Activated B cell treated with CpG ODN at 0.5 μM for 24 hours (primary cell): ENCODE measurements at regions of chr5 and their contacts with region 1.

Region 1: DNA sequence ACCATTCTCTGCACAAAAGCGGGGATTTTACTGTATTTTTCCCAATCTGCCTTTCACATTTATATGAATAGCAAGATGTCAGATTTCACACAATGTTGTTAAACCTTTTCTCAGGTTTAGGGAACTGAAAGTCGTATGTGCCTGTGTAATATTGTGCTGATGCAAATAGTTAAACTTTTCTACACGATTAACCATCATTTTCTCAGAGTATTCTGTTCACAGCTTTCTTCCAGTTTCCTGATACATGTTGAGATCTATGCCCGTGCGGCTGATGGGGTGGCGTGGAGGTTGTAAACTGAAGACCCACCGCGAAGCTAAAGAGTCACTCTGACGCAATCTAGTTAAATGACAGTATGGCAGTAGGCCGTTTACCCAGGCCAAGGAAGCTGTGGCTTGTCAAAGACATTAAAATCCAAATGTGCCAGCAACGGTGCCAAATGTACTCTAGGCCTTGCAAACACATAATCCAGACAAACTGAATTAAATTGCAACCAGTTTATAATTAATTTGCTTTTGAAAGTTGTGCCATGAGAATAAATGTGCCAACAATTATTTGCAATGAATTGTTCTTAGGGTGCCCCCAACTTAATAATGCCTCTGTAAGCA is 145.7 kb downstream of the EBF1 start:
- DNase-seq: peak; percentile 51
- ATAC-seq: peak; percentile 73
- H3K4me3 Mint-ChIP-seq: peak overlapping the region; percentile 62
- H3K27ac Mint-ChIP-seq: peak overlapping the region; percentile 96
- H3K4me1 Mint-ChIP-seq: peaks cover 97% of the 10 kb centered on the region
- H3K27me3 Mint-ChIP-seq: no peaks in the 10 kb centered on the region
- CTCF ChIP-seq: no peak

Region 2: DNA sequence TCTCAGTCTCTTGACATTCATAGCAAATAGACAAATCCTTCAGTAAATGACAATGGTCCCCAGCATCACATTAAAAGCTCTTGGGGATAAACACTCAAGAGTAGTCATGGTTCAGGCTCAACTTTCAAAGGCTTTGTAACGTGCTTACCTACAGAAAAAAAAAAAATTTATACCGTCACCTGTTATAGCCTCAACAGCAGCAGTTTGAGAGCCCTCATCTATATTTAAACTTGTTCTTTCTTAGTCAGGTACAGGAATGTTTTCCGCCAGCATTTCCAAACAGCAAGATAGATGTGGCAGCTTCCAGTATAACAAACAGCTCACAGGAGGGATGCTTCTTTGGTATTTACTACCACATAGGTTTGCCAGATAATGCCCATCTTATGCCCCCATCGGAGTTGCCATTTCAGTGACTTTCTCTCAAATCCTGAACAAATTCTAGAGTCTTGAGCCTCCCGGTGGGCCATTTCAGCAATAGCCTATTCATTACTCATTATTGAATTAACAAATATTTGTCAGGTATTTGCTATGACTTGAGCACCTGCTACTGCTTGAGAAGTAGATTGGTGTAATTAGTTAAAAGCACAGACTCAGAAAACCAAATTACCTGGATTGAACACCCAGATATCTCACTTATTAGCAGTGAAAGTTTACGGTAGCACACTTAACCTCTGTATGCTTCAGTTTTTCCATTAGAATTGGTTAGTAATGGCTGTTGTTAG is 324.3 kb before region 1 on chr5:
- CTCF ChIA-PET with region 1: no interaction called
- POLR2A ChIA-PET with region 1: no interaction called
- intact Hi-C with region 1: no loop called
- DNase-seq: no peak
- ATAC-seq: no peak
- H3K4me3 Mint-ChIP-seq: no peak overlapping the region
- H3K27ac Mint-ChIP-seq: no peak overlapping the region
- H3K4me1 Mint-ChIP-seq: no peaks in the 10 kb centered on the region
- H3K27me3 Mint-ChIP-seq: no peaks in the 10 kb centered on the region
- CTCF ChIP-seq: no peak

Region 3: DNA sequence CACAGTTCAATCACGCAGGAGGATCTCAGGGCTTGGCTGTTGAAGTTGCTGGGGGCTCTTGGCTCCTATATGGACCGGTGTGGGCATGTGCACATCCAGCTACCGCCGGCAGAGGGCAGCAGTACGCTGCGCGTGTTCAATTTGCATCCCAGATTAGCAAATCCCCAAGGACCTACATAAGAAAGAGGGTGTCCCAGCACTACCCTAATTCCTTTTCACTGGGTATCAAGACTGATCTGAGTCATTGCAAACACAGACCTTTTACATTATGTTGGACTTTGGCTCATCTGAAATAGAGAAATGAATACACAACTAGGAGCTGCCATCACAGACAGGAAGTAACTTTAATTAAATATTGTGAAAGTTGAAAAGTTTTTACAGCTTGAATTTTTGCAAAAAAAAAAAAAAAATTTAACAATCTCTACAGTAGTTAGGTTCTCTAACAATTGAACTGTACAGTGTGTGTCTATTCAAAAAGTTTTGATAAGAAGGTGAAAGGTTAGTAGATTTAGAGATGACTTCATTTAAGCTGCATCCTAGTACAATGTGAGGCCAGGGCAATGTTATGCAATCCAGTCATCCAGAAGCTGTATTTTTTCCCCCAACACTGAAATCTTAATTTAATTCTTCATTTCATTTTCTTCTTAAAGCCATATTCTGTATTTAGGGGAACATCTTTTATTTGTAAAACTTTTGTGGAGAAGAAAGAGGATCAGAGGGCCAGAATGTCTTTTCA is 258.3 kb before region 1 on chr5:
- CTCF ChIA-PET with region 1: interaction called, 6 read pairs
- POLR2A ChIA-PET with region 1: interaction called, 13 read pairs
- intact Hi-C with region 1: loop called (anchors 5 kb)
- DNase-seq: peak; percentile 76
- ATAC-seq: peak; percentile 96
- H3K4me3 Mint-ChIP-seq: no peak overlapping the region
- H3K27ac Mint-ChIP-seq: peak overlapping the region; percentile 73
- H3K4me1 Mint-ChIP-seq: peaks cover 26% of the 10 kb centered on the region
- H3K27me3 Mint-ChIP-seq: no peaks in the 10 kb centered on the region
- CTCF ChIP-seq: peak; percentile 92

Region 4: DNA sequence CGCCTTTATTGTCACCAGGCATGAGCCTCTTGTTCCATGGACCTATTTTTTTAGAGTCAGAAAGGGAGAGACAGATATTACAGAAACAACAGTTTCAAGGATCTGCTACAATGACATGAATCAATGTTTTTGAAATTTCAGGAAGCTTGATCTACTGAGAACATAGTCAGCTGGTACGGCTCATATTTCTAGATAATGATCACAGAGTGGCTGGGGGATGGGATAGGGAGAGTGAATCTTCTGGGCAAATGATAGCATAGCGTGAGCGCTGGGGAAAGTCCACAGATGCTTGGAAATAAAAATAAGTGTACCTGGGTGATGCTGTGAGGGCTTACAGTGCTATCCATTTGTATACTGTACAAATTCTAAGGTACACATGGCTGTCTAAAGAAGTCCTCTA is 194.7 kb before region 1 on chr5:
- CTCF ChIA-PET with region 1: no interaction called
- POLR2A ChIA-PET with region 1: no interaction called
- intact Hi-C with region 1: no loop called
- DNase-seq: no peak
- ATAC-seq: no peak
- H3K4me3 Mint-ChIP-seq: no peak overlapping the region
- H3K27ac Mint-ChIP-seq: peak overlapping the region; percentile 15
- H3K4me1 Mint-ChIP-seq: peaks cover 60% of the 10 kb centered on the region
- H3K27me3 Mint-ChIP-seq: no peaks in the 10 kb centered on the region
- CTCF ChIP-seq: no peak

Region 5: GRCh38 chr5:158819840-158820620 is 134.0 kb before region 1 on chr5:
- CTCF ChIA-PET with region 1: interaction called, 3 read pairs
- POLR2A ChIA-PET with region 1: interaction called, 9 read pairs
- intact Hi-C with region 1: loop called (anchors 1 kb)
- DNase-seq: no peak
- ATAC-seq: peak; percentile 76
- H3K4me3 Mint-ChIP-seq: peak overlapping the region; percentile 75
- H3K27ac Mint-ChIP-seq: peak overlapping the region; percentile 95
- H3K4me1 Mint-ChIP-seq: peaks cover 99% of the 10 kb centered on the region
- H3K27me3 Mint-ChIP-seq: no peaks in the 10 kb centered on the region
- CTCF ChIP-seq: no peak

Region 6: DNA sequence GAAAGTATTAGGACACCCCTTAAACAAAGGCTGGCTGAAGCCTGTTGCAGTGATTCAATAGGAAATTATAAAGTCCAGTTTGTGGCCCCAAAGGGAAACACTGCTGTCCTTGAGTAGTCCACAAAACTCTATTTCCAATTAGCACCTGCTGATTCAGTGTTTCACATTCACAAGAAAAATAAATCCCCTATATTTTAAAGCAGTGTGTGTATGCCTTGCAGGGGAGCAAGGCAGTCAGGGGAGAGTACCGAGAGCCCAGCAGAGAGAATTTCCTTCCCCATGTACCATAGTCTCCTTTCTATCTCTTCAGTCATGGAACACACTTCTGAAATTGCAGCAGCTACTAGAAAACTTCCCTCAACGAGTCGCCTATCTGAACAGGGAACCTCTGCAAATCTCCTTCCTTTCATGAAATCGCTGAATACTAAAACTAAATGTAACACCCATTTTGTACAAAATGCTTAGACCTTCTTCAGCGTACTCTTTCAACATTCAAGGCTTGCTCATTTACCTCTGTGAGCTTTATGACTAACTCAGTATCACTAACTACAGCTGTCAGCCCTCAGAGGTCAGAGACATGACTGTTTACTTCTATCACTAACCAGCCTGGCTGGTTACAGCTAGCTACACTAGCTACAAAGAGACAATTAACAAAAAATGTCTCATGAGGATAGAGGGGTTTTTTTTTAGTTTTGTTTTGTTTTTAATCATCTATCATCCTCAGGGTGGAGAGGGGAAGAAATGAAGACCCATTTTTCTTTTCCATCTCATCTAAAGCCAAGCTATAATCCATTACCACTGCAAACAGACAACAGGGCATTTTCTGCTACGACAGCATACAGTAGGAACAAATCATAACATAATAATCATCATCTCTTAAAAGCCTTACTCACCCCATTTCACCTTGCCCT is 43.0 kb before region 1 on chr5:
- CTCF ChIA-PET with region 1: interaction called, 3 read pairs
- POLR2A ChIA-PET with region 1: interaction called, 12 read pairs
- intact Hi-C with region 1: loop called (anchors 5 kb)
- DNase-seq: no peak
- ATAC-seq: peak; percentile 72
- H3K4me3 Mint-ChIP-seq: peak overlapping the region; percentile 61
- H3K27ac Mint-ChIP-seq: peak overlapping the region; percentile 74
- H3K4me1 Mint-ChIP-seq: peaks cover 97% of the 10 kb centered on the region
- H3K27me3 Mint-ChIP-seq: no peaks in the 10 kb centered on the region
- CTCF ChIP-seq: no peak

Region 7: DNA sequence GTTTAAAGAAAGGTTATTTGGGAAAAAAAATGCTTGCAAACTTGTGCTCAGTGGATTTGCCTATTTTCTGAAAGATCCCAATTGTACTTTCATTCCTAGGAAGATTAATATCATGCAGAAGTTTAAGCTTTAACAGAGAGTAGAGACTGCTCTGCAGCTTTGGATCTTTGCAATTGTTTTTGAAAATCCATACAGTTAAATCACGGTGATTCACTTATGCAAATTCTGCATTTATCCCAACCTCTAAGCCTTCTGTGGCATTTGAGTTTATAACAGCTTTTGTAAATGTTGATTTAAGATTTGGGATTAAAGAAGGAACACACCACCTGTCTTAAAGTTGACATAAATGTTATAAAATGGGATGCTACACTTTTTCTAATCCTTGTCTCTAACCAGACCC is 11.3 kb after region 1 on chr5:
- CTCF ChIA-PET with region 1: interaction called, 3 read pairs
- POLR2A ChIA-PET with region 1: interaction called, 19 read pairs
- intact Hi-C with region 1: no loop called
- DNase-seq: no peak
- ATAC-seq: no peak
- H3K4me3 Mint-ChIP-seq: no peak overlapping the region
- H3K27ac Mint-ChIP-seq: no peak overlapping the region
- H3K4me1 Mint-ChIP-seq: peaks cover 90% of the 10 kb centered on the region
- H3K27me3 Mint-ChIP-seq: no peaks in the 10 kb centered on the region
- CTCF ChIP-seq: no peak

Region 8: GRCh38 chr5:159010661-159011442 is 56.8 kb after region 1 on chr5:
- CTCF ChIA-PET with region 1: no interaction called
- POLR2A ChIA-PET with region 1: interaction called, 14 read pairs
- intact Hi-C with region 1: loop called (anchors 2 kb)
- DNase-seq: no peak
- ATAC-seq: peak; percentile 82
- H3K4me3 Mint-ChIP-seq: peak overlapping the region; percentile 78
- H3K27ac Mint-ChIP-seq: peak overlapping the region; percentile 91
- H3K4me1 Mint-ChIP-seq: peaks cover 91% of the 10 kb centered on the region
- H3K27me3 Mint-ChIP-seq: no peaks in the 10 kb centered on the region
- CTCF ChIP-seq: no peak

Region 9: DNA sequence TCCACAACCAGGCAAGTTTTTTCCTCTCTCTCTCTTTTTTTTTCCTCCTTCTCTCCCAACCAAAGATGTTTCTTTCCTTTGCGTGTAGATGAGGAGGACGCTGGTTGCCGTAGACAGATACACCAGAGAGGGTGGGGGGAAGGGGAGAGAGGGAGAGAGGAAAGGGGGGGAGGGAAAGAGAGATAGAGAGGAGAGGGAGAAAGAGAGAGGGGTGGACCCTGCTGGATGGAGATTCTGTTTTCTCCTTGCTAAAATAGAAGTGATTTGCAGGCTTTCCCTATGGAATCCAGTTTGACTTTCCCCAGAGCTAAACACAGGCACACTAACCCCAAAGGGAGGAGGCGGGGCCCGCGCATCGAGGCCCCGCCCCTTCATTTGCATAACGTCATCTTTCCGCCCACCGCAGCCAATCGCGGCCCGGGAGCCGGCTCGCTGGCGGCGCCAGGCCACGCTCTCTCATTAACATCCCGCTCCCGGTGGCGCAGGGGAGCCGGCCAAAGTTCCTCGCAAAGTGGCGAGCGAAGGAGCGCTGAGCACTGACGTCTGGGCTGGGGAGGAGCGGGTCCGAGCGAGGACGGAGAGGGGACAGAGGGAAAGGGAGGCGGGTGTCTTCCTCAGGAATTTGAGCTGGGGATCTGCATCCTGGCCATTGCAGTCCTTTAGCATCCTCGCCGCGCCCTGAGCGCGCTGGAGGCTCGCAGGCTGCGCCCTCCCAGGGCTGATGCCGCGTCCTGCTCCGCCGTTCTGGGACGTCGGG is 146.2 kb after region 1 on chr5:
- CTCF ChIA-PET with region 1: interaction called, 24 read pairs
- POLR2A ChIA-PET with region 1: interaction called, 483 read pairs
- intact Hi-C with region 1: loop called (anchors 1 kb)
- DNase-seq: peak; percentile 92
- ATAC-seq: peak; percentile 64
- H3K4me3 Mint-ChIP-seq: peak overlapping the region; percentile 99
- H3K27ac Mint-ChIP-seq: peak overlapping the region; percentile 95
- H3K4me1 Mint-ChIP-seq: peaks cover 69% of the 10 kb centered on the region
- H3K27me3 Mint-ChIP-seq: no peaks in the 10 kb centered on the region
- CTCF ChIP-seq: no peak

Region 10: GRCh38 chr5:159240301-159240870 is 286.4 kb after region 1 on chr5:
- CTCF ChIA-PET with region 1: no interaction called
- POLR2A ChIA-PET with region 1: no interaction called
- intact Hi-C with region 1: no loop called
- DNase-seq: no peak
- ATAC-seq: no peak
- H3K4me3 Mint-ChIP-seq: no peak overlapping the region
- H3K27ac Mint-ChIP-seq: no peak overlapping the region
- H3K4me1 Mint-ChIP-seq: peaks cover 20% of the 10 kb centered on the region
- H3K27me3 Mint-ChIP-seq: no peaks in the 10 kb centered on the region
- CTCF ChIP-seq: no peak